MCF 10A (cell line): ENCODE measurements at regions of chr2 and their contacts with region 1.

Region 1: GRCh38 chr2:98412751-98413458 is 31.8 kb upstream of the INPP4A start:
- DNase-seq: peak; percentile 70
- H3K4me3 Mint-ChIP-seq: no peak overlapping the region
- H3K27ac Mint-ChIP-seq: no peak overlapping the region
- H3K4me1 Mint-ChIP-seq: no peaks in the 10 kb centered on the region
- H3K27me3 Mint-ChIP-seq: peaks cover 13% of the 10 kb centered on the region
- CTCF ChIP-seq: peak; percentile 75

Region 2: GRCh38 chr2:98394595-98395153 is 18.2 kb before region 1 on chr2:
- CTCF ChIA-PET with region 1: no interaction called
- POLR2A ChIA-PET with region 1: no interaction called
- intact Hi-C with region 1: no loop called
- DNase-seq: no peak
- H3K4me3 Mint-ChIP-seq: no peak overlapping the region
- H3K27ac Mint-ChIP-seq: no peak overlapping the region
- H3K4me1 Mint-ChIP-seq: no peaks in the 10 kb centered on the region
- H3K27me3 Mint-ChIP-seq: peaks cover 37% of the 10 kb centered on the region
- CTCF ChIP-seq: no peak

Region 3: GRCh38 chr2:98426771-98427170 is 13.9 kb after region 1 on chr2:
- CTCF ChIA-PET with region 1: interaction called, 11 read pairs
- POLR2A ChIA-PET with region 1: no interaction called
- intact Hi-C with region 1: no loop called
- DNase-seq: no peak
- H3K4me3 Mint-ChIP-seq: no peak overlapping the region
- H3K27ac Mint-ChIP-seq: no peak overlapping the region
- H3K4me1 Mint-ChIP-seq: no peaks in the 10 kb centered on the region
- H3K27me3 Mint-ChIP-seq: peaks cover 9% of the 10 kb centered on the region
- CTCF ChIP-seq: no peak

Region 4: DNA sequence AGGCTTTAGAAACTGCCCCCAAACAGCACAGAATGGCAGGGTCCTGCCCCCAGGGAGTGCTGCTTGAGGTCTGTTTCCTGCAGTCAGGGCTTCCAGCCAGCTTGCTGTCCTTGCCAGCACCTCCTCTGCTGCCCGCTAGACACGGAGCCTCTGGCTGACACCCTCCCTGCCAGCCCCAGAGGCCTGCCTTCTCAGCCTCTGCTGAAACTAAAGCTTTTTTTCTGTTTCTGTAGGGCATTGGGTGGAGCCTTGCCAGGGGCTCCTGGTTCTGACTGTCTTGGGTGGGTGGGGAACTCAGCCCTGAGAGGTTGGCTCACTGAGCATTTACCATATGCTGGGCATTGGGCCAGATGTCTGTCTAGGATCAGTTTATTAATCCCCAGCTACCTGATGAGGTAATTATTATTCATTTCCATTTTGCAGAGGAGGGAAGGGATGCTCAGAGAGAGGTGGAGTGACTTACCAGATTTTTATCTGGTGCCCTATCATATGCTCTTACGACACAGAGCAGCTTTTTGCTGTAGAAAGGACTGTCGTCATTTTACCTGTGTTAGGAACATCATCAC is 67.1 kb after region 1 on chr2:
- CTCF ChIA-PET with region 1: no interaction called
- POLR2A ChIA-PET with region 1: no interaction called
- intact Hi-C with region 1: loop called (anchors 2 kb)
- DNase-seq: peak; percentile 89
- H3K4me3 Mint-ChIP-seq: no peak overlapping the region
- H3K27ac Mint-ChIP-seq: peak overlapping the region; percentile 27
- H3K4me1 Mint-ChIP-seq: peaks cover 36% of the 10 kb centered on the region
- H3K27me3 Mint-ChIP-seq: no peaks in the 10 kb centered on the region
- CTCF ChIP-seq: no peak

Region 5: GRCh38 chr2:98601532-98602132 is 188.7 kb after region 1 on chr2:
- CTCF ChIA-PET with region 1: interaction called, 19 read pairs
- POLR2A ChIA-PET with region 1: interaction called, 3 read pairs
- intact Hi-C with region 1: loop called (anchors 1 kb)
- DNase-seq: peak; percentile 53
- H3K4me3 Mint-ChIP-seq: no peak overlapping the region
- H3K27ac Mint-ChIP-seq: no peak overlapping the region
- H3K4me1 Mint-ChIP-seq: peaks cover 30% of the 10 kb centered on the region
- H3K27me3 Mint-ChIP-seq: no peaks in the 10 kb centered on the region
- CTCF ChIP-seq: peak; percentile 65

Region 6: DNA sequence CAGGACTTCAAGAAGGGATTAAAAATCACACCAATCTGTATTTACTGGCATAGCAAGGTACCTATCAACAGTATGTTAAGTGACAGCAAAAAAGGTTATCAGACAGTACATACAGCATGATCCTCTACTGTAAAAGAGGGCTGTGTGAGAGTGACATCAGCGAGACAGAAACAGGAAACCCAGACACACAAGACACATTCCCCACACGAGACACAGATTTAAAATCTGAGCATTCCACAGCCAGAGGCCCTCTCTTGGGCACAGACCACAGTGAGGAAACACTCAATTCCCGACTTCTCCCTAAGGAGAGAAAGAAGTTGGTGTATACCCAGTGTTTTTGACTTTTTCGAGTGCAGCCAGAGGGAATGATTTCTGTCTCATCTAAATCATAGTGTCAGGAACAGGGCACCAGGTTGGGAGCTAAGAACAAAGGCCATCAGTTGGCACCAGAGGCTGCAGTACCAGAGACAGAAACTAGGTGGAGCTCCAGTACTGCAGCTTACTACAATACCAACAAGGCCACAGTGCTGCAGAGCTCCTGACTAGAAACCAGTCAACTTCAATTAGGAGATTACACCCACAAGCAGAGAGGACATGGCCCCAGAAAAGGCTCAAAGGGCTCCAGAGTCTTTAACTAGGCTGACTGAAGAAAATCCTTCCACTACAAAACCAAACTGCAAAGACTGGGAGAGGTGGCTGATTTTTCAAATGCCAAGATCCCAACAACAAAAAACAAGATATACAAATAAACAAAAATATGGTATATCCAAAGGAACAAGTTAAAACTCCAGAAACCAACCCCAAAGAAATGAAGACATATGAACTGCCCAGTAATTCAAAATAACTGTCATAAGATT is 236.5 kb after region 1 on chr2:
- CTCF ChIA-PET with region 1: interaction called, 4 read pairs
- POLR2A ChIA-PET with region 1: no interaction called
- intact Hi-C with region 1: loop called (anchors 2 kb)
- DNase-seq: peak; percentile 80
- H3K4me3 Mint-ChIP-seq: no peak overlapping the region
- H3K27ac Mint-ChIP-seq: no peak overlapping the region
- H3K4me1 Mint-ChIP-seq: no peaks in the 10 kb centered on the region
- H3K27me3 Mint-ChIP-seq: no peaks in the 10 kb centered on the region
- CTCF ChIP-seq: peak; percentile 97